IMR-90 (cell line): ENCODE measurements at regions of chr6 and their contacts with region 1.

Region 1: DNA sequence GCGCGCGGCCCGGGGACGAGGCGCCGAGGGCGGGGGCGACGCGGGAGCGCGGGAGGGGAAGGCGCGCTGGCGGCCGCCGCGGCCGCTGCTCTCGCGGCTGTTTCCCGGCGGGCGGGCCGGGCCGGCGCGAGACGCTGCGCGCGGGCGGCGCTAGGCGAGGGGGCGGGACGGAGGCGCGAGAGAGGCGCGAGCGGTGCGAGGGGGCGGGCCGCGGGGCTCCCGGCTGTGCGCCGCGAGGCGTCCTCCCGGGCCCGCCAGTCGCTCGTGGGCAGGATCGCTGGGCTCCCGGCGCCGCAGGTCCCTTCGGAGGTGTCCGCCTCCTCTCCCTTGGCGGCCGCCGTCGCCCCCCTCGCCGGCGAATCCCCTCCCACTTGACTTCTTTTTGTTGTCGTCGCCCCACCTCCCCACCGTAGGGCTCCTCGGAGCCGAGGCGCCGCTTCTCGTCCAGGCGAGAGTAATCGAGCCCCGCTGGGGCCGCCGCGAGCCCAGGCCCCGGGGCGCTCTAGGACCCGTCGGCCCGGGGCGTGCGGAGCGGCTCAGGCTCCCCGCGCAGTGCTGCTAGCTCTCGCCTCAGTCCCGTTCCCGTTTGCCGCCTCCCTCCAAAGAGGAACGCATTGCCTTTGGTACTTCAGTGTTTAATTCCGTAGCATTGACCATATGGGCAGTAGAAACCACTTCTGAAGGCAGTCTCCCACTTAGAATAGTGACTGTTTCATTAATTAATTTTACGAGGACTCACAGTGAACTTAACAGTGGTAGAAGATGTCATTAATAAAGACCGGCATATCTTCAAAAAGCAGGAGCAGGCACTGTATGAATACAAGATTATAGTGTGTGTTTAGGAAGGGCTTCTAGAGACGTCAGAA is at the start of gene RANBP9:
- DNase-seq: peak; percentile 86
- ATAC-seq: peak; percentile 91
- H3K4me3 ChIP-seq: peak within 1 kb of the TSS; percentile 94
- H3K27ac ChIP-seq: peak within 1 kb of the TSS; percentile 94
- H3K4me1 ChIP-seq: peaks cover 3% of the 10 kb centered on the region
- H3K27me3 ChIP-seq: no peaks in the 10 kb centered on the region
- CTCF ChIP-seq: no peak
- POLR2A ChIP-seq: peak; percentile 74
- RAD21 ChIP-seq: no peak; the same call in 1 of the 2 replicates
- total RNA-seq, gene RANBP9: 17.7 and 23.3 TPM in 2 replicates

Region 2: DNA sequence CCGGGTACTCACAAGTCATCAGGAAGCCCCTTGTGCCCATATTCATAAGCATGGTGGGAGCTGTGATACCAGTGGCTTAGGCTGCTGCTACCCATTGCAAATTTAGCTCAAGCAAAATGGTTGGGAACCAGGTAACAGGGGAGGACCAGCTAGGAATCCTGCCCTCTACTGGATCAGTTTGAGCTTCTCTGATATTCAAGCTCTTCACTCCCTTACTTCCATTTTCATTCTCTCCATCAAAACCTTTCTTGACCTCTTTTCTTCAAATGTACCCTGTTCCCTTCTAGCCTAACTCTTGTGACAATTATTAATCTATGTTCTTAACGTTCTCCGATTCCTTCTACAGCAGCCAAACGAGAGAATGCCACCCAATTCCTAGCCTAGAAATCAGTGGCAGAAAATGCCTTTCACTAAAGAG is 87.1 kb before region 1 on chr6:
- CTCF ChIA-PET with region 1: interaction called, 6 read pairs
- POLR2A ChIA-PET with region 1: no interaction called
- dilution Hi-C with region 1: no loop called
- in situ Hi-C with region 1: no loop called
- intact Hi-C with region 1: loop called (anchors 2 kb)
- DNase-seq: peak; percentile 44
- ATAC-seq: peak; percentile 70
- H3K4me3 ChIP-seq: no peak overlapping the region
- H3K27ac ChIP-seq: no peak overlapping the region
- H3K4me1 ChIP-seq: no peaks in the 10 kb centered on the region
- H3K27me3 ChIP-seq: no peaks in the 10 kb centered on the region
- CTCF ChIP-seq: peak; percentile 46
- POLR2A ChIP-seq: no peak
- RAD21 ChIP-seq: peak; percentile 37

Region 3: DNA sequence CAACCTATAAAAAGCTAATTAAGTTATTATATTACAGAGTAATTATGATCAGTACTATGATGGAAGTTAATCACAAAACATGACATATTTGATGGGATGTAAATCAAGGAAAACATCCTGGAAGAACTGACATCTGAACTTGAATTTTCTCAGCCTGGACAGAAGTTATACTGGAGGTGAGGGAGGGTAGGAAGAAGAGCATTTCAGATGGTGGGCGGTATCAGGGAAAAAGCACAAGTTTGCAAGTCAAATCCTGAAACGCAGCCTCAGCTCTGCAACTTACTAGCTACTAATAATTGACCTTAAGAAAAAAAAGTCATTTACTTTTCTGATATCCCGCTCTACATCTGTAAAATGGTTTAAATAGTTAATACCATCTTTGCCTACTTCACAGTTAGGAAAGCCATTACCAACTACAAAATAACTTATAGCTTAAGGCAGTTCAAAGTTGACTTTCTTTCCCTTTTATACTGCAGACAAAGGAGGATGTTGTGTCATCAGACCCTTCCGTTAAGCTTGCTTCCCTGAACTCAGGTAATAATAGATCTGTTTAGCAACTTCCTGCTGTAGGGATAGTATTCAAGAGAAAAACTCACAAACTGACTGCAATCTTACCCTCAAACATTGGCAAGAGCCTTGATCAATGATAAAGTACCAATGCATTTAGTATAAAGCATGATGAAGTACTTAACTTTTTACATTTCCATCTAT is 75.9 kb before region 1 on chr6:
- CTCF ChIA-PET with region 1: no interaction called
- POLR2A ChIA-PET with region 1: no interaction called
- dilution Hi-C with region 1: no loop called
- in situ Hi-C with region 1: no loop called
- intact Hi-C with region 1: no loop called
- DNase-seq: no peak
- ATAC-seq: no peak
- H3K4me3 ChIP-seq: no peak overlapping the region
- H3K27ac ChIP-seq: no peak overlapping the region
- H3K4me1 ChIP-seq: no peaks in the 10 kb centered on the region
- H3K27me3 ChIP-seq: no peaks in the 10 kb centered on the region
- CTCF ChIP-seq: no peak
- POLR2A ChIP-seq: no peak
- RAD21 ChIP-seq: no peak

Region 4: GRCh38 chr6:13696226-13696625 is 15.7 kb before region 1 on chr6:
- CTCF ChIA-PET with region 1: interaction called, 11 read pairs
- POLR2A ChIA-PET with region 1: no interaction called
- dilution Hi-C with region 1: no loop called
- in situ Hi-C with region 1: no loop called
- intact Hi-C with region 1: loop called (anchors 2 kb)
- DNase-seq: peak; percentile 90
- ATAC-seq: peak; percentile 78
- H3K4me3 ChIP-seq: no peak overlapping the region
- H3K27ac ChIP-seq: no peak overlapping the region
- H3K4me1 ChIP-seq: peaks cover 12% of the 10 kb centered on the region
- H3K27me3 ChIP-seq: no peaks in the 10 kb centered on the region
- CTCF ChIP-seq: no peak
- POLR2A ChIP-seq: no peak
- RAD21 ChIP-seq: no peak

Region 5: GRCh38 chr6:13733178-13733887 is 21.4 kb after region 1 on chr6:
- CTCF ChIA-PET with region 1: no interaction called
- POLR2A ChIA-PET with region 1: no interaction called
- dilution Hi-C with region 1: no loop called
- in situ Hi-C with region 1: no loop called
- intact Hi-C with region 1: loop called (anchors 2 kb)
- DNase-seq: peak; percentile 93
- ATAC-seq: peak; percentile 89
- H3K4me3 ChIP-seq: peak overlapping the region; percentile 0; the same call in 1 of the 2 replicates
- H3K27ac ChIP-seq: no peak overlapping the region
- H3K4me1 ChIP-seq: no peaks in the 10 kb centered on the region
- H3K27me3 ChIP-seq: no peaks in the 10 kb centered on the region
- CTCF ChIP-seq: no peak
- POLR2A ChIP-seq: no peak
- RAD21 ChIP-seq: no peak

Region 6: GRCh38 chr6:13795041-13795750 is 83.2 kb after region 1 on chr6:
- CTCF ChIA-PET with region 1: no interaction called
- POLR2A ChIA-PET with region 1: no interaction called
- dilution Hi-C with region 1: no loop called
- in situ Hi-C with region 1: no loop called
- intact Hi-C with region 1: loop called (anchors 5 kb)
- DNase-seq: peak; percentile 83
- ATAC-seq: peak; percentile 96
- H3K4me3 ChIP-seq: no peak overlapping the region
- H3K27ac ChIP-seq: no peak overlapping the region
- H3K4me1 ChIP-seq: no peaks in the 10 kb centered on the region
- H3K27me3 ChIP-seq: no peaks in the 10 kb centered on the region
- CTCF ChIP-seq: peak; percentile 91
- POLR2A ChIP-seq: peak; percentile 22; the same call in 1 of the 2 replicates
- RAD21 ChIP-seq: peak; percentile 76